ENCODE measurements at regions of chr10 and their contacts with region 1.

Region 1: GRCh38 chr10:7121154-7121810 is 289.6 kb downstream of the SFMBT2 start:
- DNase-seq: peak in 1 of 5 donors; percentile 52
- H3K4me3 ChIP-seq: no peak overlapping the region
- H3K27ac ChIP-seq: no peak overlapping the region
- H3K4me1 ChIP-seq: no peaks in the 10 kb centered on the region
- H3K27me3 ChIP-seq: no peaks in the 10 kb centered on the region
- CTCF ChIP-seq: no peak
- EP300 ChIP-seq: no peak
- POLR2A ChIP-seq: no peak

Region 2: DNA sequence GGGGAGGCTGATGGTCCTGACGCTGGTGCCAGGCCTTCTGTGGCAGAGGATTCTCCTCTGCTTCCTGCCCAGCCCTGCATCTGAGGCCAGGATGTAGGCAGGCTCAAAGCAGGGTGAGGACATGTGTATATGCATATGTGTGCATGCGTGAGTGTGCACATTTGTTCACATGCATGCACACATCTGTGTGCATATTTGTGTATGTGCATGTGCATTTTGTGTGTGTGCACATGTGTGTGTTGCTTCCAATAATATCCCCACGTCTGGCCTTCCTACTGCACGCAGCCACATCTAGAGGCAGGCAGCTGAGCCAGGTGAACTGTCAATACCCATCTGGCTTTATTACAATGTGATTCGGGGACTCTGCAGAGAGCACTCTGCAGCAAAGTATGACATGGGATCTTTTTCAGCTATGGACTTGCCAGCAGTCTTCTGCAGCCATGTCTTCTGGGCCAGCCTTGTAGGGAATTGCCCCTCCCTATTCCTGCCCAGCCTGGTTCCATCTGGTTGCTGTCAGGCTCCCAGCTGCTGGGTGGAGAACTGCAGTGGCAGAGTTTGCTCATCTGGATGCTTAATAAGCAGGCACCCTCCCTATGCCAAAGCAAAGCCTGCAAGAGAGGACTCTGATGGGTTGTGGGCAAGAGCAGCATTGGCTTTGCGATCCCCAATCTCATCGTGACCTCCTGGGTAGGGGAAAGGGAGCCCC is 777.8 kb before region 1 on chr10:
- intact Hi-C with region 1: loop called in 1 of 4 experiments (anchors 5 kb)
- DNase-seq: no peak
- H3K4me3 ChIP-seq: no peak overlapping the region
- H3K27ac ChIP-seq: no peak overlapping the region
- H3K4me1 ChIP-seq: no peaks in the 10 kb centered on the region
- H3K27me3 ChIP-seq: no peaks in the 10 kb centered on the region
- CTCF ChIP-seq: no peak
- EP300 ChIP-seq: no peak
- POLR2A ChIP-seq: no peak

Measured in ovary (tissue), 10 donors.